GM13976 (cell line): ENCODE measurements at regions of chr11 and their contacts with region 1.

Region 1: GRCh38 chr11:74948898-74949747 is at the starts of genes SPCS2 and XRRA1:
- DNase-seq: peak; percentile 95
- CTCF ChIP-seq: no peak

Region 2: GRCh38 chr11:75002516-75002915 is 53.4 kb after region 1 on chr11:
- in situ Hi-C with region 1: no loop called
- DNase-seq: no peak
- CTCF ChIP-seq: no peak

Region 3: GRCh38 chr11:75014129-75014528 is 65.0 kb after region 1 on chr11:
- in situ Hi-C with region 1: loop called (anchors 10 kb)
- DNase-seq: no peak
- CTCF ChIP-seq: no peak

Region 4: GRCh38 chr11:75204685-75205563 is 255.8 kb after region 1 on chr11:
- in situ Hi-C with region 1: loop called (anchors 25 kb)
- DNase-seq: peak; percentile 89
- CTCF ChIP-seq: peak; percentile 88